ENCODE measurements at regions of chr3 and their contacts with region 1.

Region 1: DNA sequence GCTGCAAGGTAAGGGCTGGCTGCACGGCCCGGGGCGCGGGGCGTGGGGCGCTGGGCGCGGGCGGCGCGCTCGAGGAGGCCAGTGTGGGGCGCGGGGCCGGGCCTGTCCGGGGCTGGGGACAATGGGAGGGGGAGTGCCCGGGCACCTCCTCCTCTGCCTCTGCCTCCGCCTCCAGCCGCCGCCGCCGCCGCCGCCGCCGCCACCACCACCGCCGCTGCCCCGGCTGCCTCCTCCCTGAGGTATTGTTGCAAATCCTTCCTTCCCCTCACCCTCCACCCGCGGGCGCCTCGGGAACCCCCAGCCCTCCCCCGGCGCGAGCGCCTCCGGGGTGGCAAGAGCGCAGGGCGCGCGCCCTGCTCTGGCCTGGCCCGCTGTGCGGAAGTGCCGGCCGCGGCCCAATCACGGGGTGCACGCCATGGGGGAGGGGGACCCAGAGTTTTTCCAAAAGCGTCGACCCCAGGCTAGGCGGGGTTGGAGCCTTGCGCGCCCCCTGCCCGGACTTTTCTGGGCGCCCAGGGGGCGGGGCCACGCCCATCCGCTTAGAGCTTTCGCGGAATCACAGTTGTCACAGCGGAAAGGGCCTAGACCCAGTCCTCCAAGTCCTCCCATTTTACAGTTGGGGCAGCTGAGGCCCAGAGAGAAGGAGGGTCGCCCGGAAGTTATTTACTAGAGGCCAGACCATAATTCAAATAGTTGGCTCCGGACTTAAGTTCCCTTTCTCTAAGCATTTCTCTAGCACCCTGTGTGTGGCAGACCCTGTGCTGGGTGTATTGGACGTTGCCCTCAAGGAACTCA is at the start of gene LPP:
- DNase-seq: peak; percentile 85
- H3K4me3 ChIP-seq: peak within 1 kb of the TSS; percentile 43 to 77 (median 66)
- H3K27ac ChIP-seq: peak within 1 kb of the TSS; percentile 94
- H3K4me1 ChIP-seq: peaks cover 32% of the 10 kb centered on the region
- H3K27me3 ChIP-seq: no peaks in the 10 kb centered on the region
- CTCF ChIP-seq: no peak
- total RNA-seq, gene LPP: 66.8 to 109 TPM

Region 2: DNA sequence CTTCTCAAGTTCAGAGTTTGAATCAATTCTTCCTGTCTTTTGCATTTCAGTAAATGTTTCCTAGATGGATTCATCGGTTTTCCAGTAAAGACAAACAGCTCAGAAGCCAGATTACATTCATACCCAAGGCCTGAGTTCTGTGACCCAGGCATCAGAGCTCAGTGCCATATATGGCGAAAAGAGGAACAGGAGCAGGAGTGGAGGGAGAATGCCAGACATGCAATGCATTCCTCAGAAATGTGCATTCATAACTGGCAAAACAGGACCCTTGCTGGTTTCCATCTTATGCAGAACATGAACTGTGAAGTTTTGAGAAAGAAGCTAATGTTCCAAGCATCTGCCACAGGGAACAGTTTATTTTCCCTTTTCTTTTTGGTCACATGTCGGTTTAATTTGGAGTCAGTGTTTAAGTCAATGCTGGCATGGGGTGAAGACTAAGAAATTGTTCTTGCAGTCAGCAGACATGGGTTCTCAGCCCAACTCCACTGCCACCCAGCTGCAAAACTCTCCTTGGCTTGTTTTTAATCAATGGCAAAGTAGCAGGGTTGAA is 116.3 kb after region 1 on chr3:
- CTCF ChIA-PET with region 1: interaction called, 3 read pairs
- dilution Hi-C with region 1: no loop called
- in situ Hi-C with region 1: no loop called
- intact Hi-C with region 1: loop called (anchors 10 kb)
- DNase-seq: peak; percentile 62
- H3K4me3 ChIP-seq: no peak overlapping the region
- H3K27ac ChIP-seq: peak overlapping the region; percentile 62
- H3K4me1 ChIP-seq: peaks cover 43% of the 10 kb centered on the region
- H3K27me3 ChIP-seq: no peaks in the 10 kb centered on the region
- CTCF ChIP-seq: no peak

Region 3: DNA sequence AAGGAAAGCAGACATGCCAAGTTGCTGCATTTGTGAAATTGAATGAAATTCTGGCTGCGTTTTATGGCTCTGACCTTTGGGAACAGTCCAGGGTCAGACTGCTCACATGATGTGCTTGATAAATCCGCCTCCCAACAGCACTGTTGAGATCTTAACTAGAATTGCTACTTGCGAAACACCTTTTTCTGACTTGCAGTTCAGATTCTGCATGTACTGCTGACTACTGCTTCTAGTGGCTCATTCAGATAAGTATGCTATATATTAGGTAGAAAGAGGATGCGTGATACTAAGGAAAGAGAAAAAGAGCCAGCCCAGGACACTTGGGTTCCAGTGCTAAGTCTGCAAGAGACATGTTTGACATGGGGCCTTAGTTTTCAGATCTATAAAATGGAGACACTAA is 129.1 kb after region 1 on chr3:
- CTCF ChIA-PET with region 1: interaction called, 11 read pairs
- dilution Hi-C with region 1: no loop called
- in situ Hi-C with region 1: no loop called
- intact Hi-C with region 1: loop called (anchors 10 kb)
- DNase-seq: no peak
- H3K4me3 ChIP-seq: no peak overlapping the region
- H3K27ac ChIP-seq: no peak overlapping the region
- H3K4me1 ChIP-seq: peaks cover 37% of the 10 kb centered on the region
- H3K27me3 ChIP-seq: no peaks in the 10 kb centered on the region
- CTCF ChIP-seq: peak in 1 of 2 donors; percentile 32

Region 4: DNA sequence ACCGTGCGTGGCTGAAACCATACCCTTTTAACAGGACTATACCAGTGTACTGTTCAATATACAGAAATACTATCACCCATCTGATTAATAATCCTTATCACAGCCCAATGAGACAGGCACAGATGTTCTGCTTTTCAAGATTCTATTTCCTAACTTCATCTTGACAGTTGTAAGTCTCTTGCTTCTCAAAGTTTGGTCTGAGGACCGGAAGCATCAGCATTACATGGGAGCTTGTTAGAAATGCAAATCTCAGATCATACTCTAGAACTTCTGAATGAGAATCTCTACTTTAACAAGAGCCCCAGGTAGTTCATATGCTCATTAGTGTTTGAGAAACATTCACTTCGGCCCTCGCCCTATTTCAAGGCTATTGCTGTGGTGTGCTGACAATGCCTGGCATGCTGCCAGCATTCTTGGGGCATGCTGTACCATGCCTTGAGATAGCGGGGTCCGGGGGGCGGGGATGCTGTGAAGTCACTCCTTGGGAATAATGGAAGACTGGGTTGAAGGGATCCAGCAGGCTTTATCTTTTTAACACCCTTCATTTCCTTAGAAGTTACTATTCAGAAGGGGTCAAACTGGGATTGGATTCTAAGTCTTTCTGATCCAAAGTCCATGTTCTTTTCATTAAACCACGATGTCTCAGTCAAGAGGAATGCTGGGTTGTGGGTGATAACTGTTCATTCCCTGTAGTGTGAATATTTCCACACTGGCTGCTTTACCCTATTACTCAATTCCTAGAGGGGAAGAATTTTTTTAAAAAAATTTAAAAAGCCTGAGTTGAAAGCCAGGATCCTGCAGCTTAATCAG is 194.4 kb after region 1 on chr3:
- CTCF ChIA-PET with region 1: no interaction called
- dilution Hi-C with region 1: no loop called
- in situ Hi-C with region 1: no loop called
- intact Hi-C with region 1: loop called (anchors 1 kb)
- DNase-seq: peak; percentile 95
- H3K4me3 ChIP-seq: peak overlapping the region in 1 of 3 experiments; percentile 8
- H3K27ac ChIP-seq: peak overlapping the region; percentile 94
- H3K4me1 ChIP-seq: peaks cover 38% of the 10 kb centered on the region
- H3K27me3 ChIP-seq: no peaks in the 10 kb centered on the region
- CTCF ChIP-seq: no peak

Region 5: DNA sequence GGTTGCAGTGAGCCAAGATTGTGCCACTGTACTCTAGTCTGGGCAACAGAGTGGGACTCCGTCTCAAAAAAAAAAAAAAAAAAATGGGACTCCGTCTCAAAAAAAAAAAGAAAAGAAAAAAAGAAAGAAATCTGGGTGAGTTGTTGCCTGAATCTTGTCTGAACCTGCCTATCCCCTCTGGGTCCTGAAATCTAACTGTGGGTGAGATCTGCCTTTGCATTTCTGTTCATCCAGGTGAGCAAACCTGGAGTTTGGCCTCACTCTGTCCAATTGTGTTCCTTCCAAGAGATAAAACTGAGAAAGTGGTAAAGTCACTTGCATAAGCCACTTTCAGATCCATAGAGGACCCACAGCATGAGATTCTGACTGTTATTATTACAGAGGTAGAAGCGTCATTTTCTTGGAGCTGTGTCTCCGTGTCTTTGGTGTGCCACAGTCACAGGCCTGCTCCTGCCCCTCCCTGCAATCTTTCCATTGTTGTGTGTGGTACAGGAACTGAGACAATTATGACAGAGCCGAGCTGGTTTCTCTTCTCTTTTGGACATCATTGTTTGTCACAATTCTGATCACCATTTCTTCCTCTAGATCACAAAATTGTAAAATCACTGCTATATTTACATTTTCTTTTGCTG is 235.6 kb after region 1 on chr3:
- CTCF ChIA-PET with region 1: no interaction called
- dilution Hi-C with region 1: no loop called
- in situ Hi-C with region 1: no loop called
- intact Hi-C with region 1: loop called (anchors 2 kb)
- DNase-seq: peak; percentile 74
- H3K4me3 ChIP-seq: peak overlapping the region in 2 of 3 experiments; percentile 6 to 17
- H3K27ac ChIP-seq: peak overlapping the region; percentile 95
- H3K4me1 ChIP-seq: peaks cover 37% of the 10 kb centered on the region
- H3K27me3 ChIP-seq: no peaks in the 10 kb centered on the region
- CTCF ChIP-seq: no peak

Region 6: DNA sequence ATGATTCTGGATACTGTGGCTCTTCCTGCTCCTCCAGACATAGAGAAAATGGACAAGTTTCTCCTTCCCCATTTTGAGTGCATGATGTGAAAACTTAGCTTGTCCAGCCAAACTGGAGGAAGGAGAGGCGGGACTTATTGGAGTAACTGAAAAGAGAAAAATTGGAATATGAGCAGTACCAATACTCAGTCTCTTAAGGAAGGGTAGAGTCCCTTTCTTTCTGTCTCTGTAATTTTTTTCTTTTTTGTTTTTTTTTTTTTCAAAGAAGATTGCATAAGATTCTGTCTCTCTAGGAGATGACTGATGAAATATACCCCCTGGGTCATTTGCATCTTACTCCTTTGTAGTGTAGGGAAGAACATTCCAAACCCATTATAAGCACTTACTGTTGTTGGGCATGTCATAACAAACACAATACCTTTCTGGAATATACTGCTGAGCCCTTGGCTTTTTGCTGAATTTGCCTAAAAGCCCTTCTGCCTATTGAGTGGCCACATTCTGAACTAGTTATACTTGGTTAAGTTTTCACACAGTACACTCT is 519.5 kb after region 1 on chr3:
- CTCF ChIA-PET with region 1: no interaction called
- dilution Hi-C with region 1: no loop called
- in situ Hi-C with region 1: no loop called
- intact Hi-C with region 1: loop called (anchors 10 kb)
- DNase-seq: peak; percentile 93
- H3K4me3 ChIP-seq: no peak overlapping the region
- H3K27ac ChIP-seq: peak overlapping the region; percentile 97
- H3K4me1 ChIP-seq: peaks cover 35% of the 10 kb centered on the region
- H3K27me3 ChIP-seq: no peaks in the 10 kb centered on the region
- CTCF ChIP-seq: no peak

Measured in mammary epithelial cell (primary cell).